ENCODE measurements at regions of chr17 and their contacts with region 1.

Region 1: DNA sequence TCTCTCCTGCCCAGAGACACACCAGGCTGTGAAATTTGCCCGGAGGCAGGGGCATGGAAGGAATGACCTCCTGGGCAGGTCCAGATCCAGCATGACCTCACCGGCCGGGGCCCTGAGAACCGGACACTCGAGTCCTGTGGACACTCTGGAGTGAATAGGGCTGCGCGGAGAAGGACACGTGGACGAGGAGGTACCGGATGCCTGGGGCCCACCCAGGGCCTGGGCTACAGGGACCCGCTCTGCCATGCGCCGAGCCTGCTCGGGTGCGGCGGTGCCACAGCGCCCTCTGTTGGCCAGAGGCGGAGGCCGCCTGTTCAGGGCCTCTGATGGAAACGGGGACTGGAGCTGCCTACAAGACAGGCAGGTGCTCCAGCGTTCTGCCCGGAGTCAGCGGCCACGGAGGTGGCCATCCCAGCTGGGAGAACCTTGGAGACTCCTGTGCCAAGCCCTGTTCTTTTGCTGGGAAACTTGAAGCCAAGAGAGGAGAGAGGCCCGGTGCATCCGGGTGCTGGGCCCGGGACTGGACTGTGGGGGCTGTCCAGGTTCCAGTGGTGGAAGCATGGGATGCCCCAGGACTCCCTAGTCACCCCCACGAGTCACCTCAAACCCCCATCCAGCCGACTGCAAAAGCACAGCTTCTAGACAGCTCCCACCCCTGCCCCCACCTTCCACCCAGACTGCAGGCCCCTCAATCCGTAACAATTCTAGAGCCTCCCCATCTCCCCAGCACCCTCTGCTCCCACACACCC is 19.3 kb upstream of the NXPH3 start:
- DNase-seq: peak; percentile 77
- H3K4me3 Mint-ChIP-seq: no peak overlapping the region
- H3K27ac Mint-ChIP-seq: no peak overlapping the region
- H3K4me1 Mint-ChIP-seq: peaks cover 9% of the 10 kb centered on the region
- H3K27me3 Mint-ChIP-seq: peaks cover 5% of the 10 kb centered on the region

Region 2: DNA sequence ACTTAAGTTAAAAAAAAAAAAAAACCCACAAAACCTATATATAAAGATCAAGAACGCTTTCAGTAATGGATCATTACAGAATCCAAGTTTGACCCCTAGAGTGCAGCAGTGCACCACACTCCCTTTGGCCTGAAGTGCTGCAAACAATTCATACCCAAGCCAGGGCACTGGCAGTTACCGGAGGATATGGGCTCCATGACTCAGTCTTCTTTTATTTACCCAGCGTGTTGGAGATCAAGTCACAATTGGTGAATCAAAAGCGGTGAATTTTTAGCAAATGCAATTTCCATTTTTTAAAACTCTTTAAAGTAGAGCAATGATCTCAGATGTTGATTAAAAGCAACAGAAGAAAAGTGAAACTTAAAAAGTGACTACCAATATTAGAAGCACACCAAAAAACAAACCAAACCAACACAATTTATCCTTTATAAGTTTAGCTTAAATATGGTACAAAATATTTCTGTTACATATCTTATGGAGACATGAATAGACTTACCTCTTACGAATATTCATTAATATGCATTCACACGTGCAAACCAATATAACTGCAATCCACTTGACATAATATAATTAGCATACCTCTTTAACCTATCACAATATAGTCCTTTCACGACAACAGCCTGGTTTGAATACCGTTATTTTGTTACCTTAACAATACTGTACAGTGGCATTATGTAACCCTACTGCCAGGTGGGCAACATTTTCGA is 240.7 kb before region 1 on chr17:
- intact Hi-C with region 1: loop called (anchors 1 kb)
- DNase-seq: peak; percentile 63
- H3K4me3 Mint-ChIP-seq: peak overlapping the region; percentile 69
- H3K27ac Mint-ChIP-seq: peak overlapping the region; percentile 70
- H3K4me1 Mint-ChIP-seq: peaks cover 30% of the 10 kb centered on the region
- H3K27me3 Mint-ChIP-seq: no peaks in the 10 kb centered on the region

Region 3: DNA sequence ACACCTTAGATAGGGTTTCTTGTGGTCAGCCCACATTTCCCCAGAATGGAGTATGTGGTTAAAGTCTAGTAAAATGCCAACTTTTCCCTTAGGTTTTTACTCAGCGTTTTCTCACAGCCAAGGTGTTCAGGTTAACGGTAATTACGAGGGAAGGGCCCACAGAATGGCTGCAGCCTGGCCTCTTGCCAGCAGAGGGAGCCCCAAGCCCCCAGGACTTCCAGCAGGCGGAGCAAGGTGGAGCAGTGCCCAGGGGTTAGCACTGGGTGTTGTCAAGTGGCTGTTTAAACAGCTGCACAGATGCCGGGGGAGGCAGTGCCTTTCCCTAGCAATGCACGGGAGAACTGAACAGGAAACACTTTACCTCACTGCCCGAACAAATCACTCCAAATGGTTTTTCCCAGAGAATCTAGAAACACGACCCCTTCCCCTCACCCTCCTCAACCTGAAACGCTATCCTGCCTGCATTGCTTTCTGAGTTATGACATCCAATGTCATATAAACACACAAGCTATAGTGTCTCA is 148.4 kb before region 1 on chr17:
- intact Hi-C with region 1: loop called (anchors 1 kb)
- DNase-seq: peak; percentile 77
- H3K4me3 Mint-ChIP-seq: peak overlapping the region; percentile 3
- H3K27ac Mint-ChIP-seq: no peak overlapping the region
- H3K4me1 Mint-ChIP-seq: peaks cover 31% of the 10 kb centered on the region
- H3K27me3 Mint-ChIP-seq: no peaks in the 10 kb centered on the region

Region 4: DNA sequence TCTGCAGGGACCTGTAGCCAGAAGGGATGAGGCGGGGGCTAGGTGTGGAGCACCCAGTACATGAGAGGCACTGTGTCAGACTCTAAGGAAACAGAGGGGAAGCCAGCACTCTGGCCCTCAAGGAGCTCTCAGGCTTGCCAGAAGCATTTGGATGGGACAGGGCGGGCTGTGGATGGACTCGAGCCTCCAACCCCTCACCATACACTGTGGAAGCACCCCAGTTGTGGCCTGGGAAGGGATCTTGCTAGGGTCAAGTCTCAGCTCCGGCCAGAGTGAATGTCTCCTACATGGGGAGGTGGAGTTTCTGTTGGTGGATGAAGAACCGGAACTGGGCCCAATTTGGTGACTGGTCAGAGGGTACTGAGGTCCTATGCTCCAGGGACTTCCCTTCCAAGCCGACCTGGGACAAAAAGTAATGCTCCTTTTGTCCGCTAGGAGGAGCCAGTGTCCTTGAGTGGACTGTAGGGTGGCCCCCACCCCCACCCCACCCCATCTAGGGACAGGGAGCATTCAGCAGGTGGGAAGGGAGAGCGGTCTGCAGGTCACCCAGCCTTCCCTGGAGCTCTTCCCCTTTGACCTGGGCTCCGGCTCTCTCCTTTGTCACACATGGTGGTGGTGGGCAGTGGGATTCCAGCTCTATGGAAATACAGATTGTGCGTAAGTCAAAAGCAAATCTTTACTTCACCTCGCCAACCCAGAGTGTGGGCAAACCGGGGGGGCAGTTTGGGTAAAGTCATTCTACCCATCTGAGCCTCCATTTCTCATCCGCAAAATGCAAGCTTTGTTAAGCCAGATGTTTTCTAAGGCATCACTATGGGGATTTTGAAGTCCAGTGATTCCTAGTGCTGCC is 121.4 kb before region 1 on chr17:
- intact Hi-C with region 1: loop called (anchors 1 kb)
- DNase-seq: peak; percentile 12
- H3K4me3 Mint-ChIP-seq: no peak overlapping the region
- H3K27ac Mint-ChIP-seq: no peak overlapping the region
- H3K4me1 Mint-ChIP-seq: no peaks in the 10 kb centered on the region
- H3K27me3 Mint-ChIP-seq: peaks cover 36% of the 10 kb centered on the region

Region 5: DNA sequence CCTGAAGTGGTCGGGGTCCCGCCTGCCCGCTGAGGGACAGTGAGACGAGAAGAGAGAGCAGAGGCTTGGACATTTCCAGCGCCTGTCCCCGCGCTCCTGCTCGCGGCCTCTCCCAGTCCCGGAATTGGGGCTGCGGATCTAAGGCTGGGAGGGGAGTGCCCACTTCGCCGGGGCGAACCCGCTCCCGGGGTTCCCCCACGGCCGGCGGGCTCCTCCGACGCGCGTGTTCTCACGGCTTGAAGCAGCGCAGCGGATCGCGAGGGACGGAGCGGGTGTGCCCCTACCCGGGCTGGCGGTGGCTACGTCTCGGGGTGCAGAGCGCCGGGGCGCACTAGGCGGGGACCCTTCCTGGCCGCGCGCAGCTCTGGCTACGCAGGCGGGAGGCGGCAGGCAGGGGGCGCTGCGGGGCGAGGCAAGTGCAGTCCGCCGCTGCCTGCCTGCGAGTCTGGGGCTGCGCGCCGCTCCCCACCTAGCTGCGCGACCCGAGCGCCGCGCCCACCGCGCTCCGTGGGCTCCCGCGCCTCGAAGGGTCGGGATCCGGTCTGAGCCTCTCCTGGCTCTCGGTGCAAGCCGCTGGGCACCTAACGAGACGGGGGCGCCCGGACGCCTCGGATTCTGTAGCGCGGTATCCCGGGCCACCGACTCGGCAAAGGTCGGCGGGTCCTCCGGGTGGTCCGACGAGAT is 60.1 kb before region 1 on chr17:
- intact Hi-C with region 1: loop called (anchors 1 kb)
- DNase-seq: peak; percentile 77
- H3K4me3 Mint-ChIP-seq: peak overlapping the region; percentile 66
- H3K27ac Mint-ChIP-seq: no peak overlapping the region
- H3K4me1 Mint-ChIP-seq: no peaks in the 10 kb centered on the region
- H3K27me3 Mint-ChIP-seq: peaks cover 75% of the 10 kb centered on the region

Measured in activated T-helper 1 cell treated with anti-CD3 and anti-CD28 coated beads, Interleukin-12 subunit alpha, Interleukin-12 subunit beta, Interleukin-2, Interleukin-4 antibody, amounts not matched to agents 30 ng/mL and 10 ng/mL and 1 ng/mL, durations not matched to agents 14 hours and 24 hours and 36 hours (primary cell).